GM12878 (cell line): ENCODE measurements at regions of chrX and their contacts with region 1.

Region 1: DNA sequence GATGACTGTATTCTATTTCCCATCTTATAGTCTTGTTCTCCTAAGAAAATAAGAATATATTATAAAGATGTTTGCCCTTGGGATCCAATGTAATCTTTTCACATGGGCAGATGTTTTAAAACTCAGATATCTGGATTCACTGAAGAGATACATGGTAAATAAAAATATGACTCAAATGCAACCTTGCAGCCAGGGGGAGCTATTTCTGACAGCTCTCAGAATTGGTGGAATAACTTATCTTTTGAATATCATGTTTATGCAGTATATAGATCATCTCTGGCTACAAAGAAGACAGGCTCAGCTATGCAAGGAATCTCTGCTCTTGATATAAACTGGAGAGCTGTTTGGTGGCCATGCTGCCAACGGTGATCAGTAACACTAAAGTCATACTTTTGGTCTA is 274.7 kb downstream of the GLUD2 start:
- DNase-seq: no peak
- ATAC-seq: no peak
- H3K4me3 ChIP-seq: no peak overlapping the region
- H3K27ac ChIP-seq: no peak overlapping the region
- H3K4me1 ChIP-seq: no peaks in the 10 kb centered on the region
- H3K27me3 ChIP-seq: no peaks in the 10 kb centered on the region
- CTCF ChIP-seq: peak; percentile 31 to 48 (median 38); a peak in 3 of 6 replicates
- EP300 ChIP-seq: no peak
- POLR2A ChIP-seq: no peak
- RAD21 ChIP-seq: peak; percentile 10; the same call in 1 of the 2 replicates

Region 2: GRCh38 chrX:120522820-120523219 is 799.3 kb before region 1 on chrX:
- CTCF ChIA-PET with region 1: no interaction called
- POLR2A ChIA-PET with region 1: interaction called, 10 read pairs
- RAD21 ChIA-PET with region 1: no interaction called
- SMC1A ChIA-PET with region 1: no interaction called
- in situ Hi-C with region 1: no loop called
- intact Hi-C with region 1: no loop called
- DNase-seq: no peak
- ATAC-seq: no peak
- H3K4me3 ChIP-seq: no peak overlapping the region
- H3K27ac ChIP-seq: no peak overlapping the region
- H3K4me1 ChIP-seq: no peaks in the 10 kb centered on the region
- H3K27me3 ChIP-seq: no peaks in the 10 kb centered on the region
- CTCF ChIP-seq: no peak
- EP300 ChIP-seq: no peak
- POLR2A ChIP-seq: no peak
- RAD21 ChIP-seq: no peak

Region 3: GRCh38 chrX:121308276-121308805 is 13.8 kb before region 1 on chrX:
- CTCF ChIA-PET with region 1: interaction called, 31 read pairs
- POLR2A ChIA-PET with region 1: no interaction called
- RAD21 ChIA-PET with region 1: interaction called, 8 read pairs
- SMC1A ChIA-PET with region 1: interaction called, 10 read pairs
- in situ Hi-C with region 1: no loop called
- intact Hi-C with region 1: no loop called
- DNase-seq: peak; percentile 68
- ATAC-seq: peak; percentile 86
- H3K4me3 ChIP-seq: no peak overlapping the region
- H3K27ac ChIP-seq: no peak overlapping the region
- H3K4me1 ChIP-seq: peaks cover 15% of the 10 kb centered on the region
- H3K27me3 ChIP-seq: no peaks in the 10 kb centered on the region
- CTCF ChIP-seq: peak; percentile 44 to 63 (median 49); a peak in 4 of 6 replicates
- EP300 ChIP-seq: peak in 1 of 2 experiments; percentile 75; a peak in 1 of 4 replicates
- POLR2A ChIP-seq: no peak
- RAD21 ChIP-seq: peak; percentile 59

Region 4: GRCh38 chrX:121333942-121334341 is 11.8 kb after region 1 on chrX:
- CTCF ChIA-PET with region 1: interaction called, 12 read pairs
- POLR2A ChIA-PET with region 1: interaction called, 5 read pairs
- RAD21 ChIA-PET with region 1: no interaction called
- SMC1A ChIA-PET with region 1: interaction called, 3 read pairs
- in situ Hi-C with region 1: no loop called
- intact Hi-C with region 1: no loop called
- DNase-seq: no peak
- ATAC-seq: no peak
- H3K4me3 ChIP-seq: no peak overlapping the region
- H3K27ac ChIP-seq: no peak overlapping the region
- H3K4me1 ChIP-seq: no peaks in the 10 kb centered on the region
- H3K27me3 ChIP-seq: no peaks in the 10 kb centered on the region
- CTCF ChIP-seq: peak in 1 of 3 experiments; percentile 14; a peak in 2 of 6 replicates
- EP300 ChIP-seq: no peak
- POLR2A ChIP-seq: no peak
- RAD21 ChIP-seq: peak; percentile 54

Region 5: GRCh38 chrX:121579016-121579760 is 257.0 kb after region 1 on chrX:
- CTCF ChIA-PET with region 1: interaction called, 11 read pairs
- POLR2A ChIA-PET with region 1: no interaction called
- RAD21 ChIA-PET with region 1: interaction called, 3 read pairs
- SMC1A ChIA-PET with region 1: interaction called, 6 read pairs
- in situ Hi-C with region 1: no loop called
- intact Hi-C with region 1: loop called (anchors 5 kb)
- DNase-seq: peak; percentile 4
- ATAC-seq: peak; percentile 92
- H3K4me3 ChIP-seq: no peak overlapping the region
- H3K27ac ChIP-seq: no peak overlapping the region
- H3K4me1 ChIP-seq: no peaks in the 10 kb centered on the region
- H3K27me3 ChIP-seq: no peaks in the 10 kb centered on the region
- CTCF ChIP-seq: peak; percentile 44 to 54 (median 51); a peak in 5 of 6 replicates
- EP300 ChIP-seq: no peak
- POLR2A ChIP-seq: no peak
- RAD21 ChIP-seq: peak; percentile 74